ENCODE measurements at regions of chr12 and their contacts with region 1.

Region 1: GRCh38 chr12:47779301-47779942 is 6.4 kb downstream of the SLC48A1 start:
- DNase-seq: peak; percentile 83 to 94 (median 89)
- ATAC-seq: peak; percentile 85
- H3K4me3 ChIP-seq: no peak overlapping the region
- H3K27ac ChIP-seq: no peak overlapping the region
- H3K4me1 ChIP-seq: peaks cover 11 to 52% of the 10 kb centered on the region in 2 donors
- H3K27me3 ChIP-seq: no peaks in the 10 kb centered on the region
- CTCF ChIP-seq: peak; percentile 88 to 93

Region 2: GRCh38 chr12:47630316-47630715 is 149.1 kb before region 1 on chr12:
- intact Hi-C with region 1: no loop called
- DNase-seq: no peak
- ATAC-seq: no peak
- H3K4me3 ChIP-seq: no peak overlapping the region
- H3K27ac ChIP-seq: no peak overlapping the region
- H3K4me1 ChIP-seq: no peaks in the 10 kb centered on the region
- H3K27me3 ChIP-seq: no peaks in the 10 kb centered on the region
- CTCF ChIP-seq: no peak

Region 3: DNA sequence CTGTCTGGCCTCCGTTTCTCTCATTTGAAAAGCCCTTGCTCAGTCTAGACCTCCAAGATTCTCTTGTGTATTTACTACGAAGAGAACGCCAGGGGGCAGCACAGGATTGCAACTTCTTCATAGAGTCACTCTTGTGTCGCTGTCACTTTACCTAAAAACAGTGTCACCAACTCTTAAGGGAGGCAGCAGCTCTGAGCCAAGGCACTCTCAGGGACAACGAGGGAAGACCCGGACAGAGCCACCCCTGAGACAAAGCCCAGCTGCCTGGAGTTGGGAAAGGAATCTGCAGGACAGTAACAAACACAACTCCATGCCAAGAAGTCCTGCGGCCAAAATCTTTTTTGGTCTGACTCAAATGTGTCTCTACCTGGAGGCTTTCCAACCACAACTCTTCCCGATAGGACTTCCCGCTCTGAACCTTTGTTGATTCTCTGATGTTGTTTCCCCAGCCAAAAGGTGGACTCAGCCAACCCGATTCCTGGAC is 64.0 kb before region 1 on chr12:
- intact Hi-C with region 1: loop called in 1 of 2 experiments (anchors 5 kb)
- DNase-seq: peak in 3 of 4 donors; percentile 71 to 83 (median 78)
- ATAC-seq: peak; percentile 75
- H3K4me3 ChIP-seq: no peak overlapping the region
- H3K27ac ChIP-seq: no peak overlapping the region
- H3K4me1 ChIP-seq: peaks cover 19 to 36% of the 10 kb centered on the region in 2 donors
- H3K27me3 ChIP-seq: no peaks in the 10 kb centered on the region
- CTCF ChIP-seq: peak; percentile 76 to 82

Region 4: DNA sequence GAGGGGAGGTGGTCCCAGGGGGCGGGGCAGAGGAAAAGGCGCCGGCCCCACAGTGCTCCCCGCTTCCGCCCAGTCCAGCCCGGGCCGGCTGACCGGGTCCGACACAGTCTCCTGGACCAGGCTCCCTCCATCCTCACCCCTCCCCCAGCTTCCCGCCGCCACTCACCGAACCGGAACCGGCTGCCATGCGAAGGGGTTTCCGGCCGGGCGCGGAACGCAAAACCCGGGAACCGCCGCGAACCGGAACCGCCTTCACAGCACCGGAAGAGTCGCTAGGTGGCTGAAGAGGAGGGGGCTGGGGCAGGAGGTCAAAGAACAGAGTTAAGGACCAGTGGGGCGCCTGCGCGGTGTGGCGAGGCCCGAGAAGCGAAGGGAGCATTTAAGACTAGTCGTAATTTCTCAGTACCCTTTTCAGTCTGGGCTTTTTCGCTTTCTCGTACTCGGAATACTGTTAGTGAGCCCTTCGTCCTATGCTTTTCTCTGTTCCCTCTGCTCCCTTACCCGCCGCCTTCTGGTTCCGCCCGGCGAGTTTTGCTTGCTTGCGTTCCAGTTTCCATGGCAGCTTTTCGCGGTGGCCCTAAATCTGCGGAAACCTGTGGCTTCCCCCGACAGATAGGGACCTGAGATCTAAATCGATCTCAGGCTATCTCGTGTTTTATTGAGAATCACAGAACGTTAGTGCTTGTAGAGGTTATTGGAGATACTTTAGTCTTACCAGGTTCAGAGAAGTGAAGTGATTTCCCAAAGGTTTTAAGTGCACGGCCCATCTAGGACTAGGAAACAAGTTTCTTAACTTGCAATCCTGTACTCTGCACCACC is 326.6 kb after region 1 on chr12 and contains the start of gene SENP1:
- intact Hi-C with region 1: no loop called
- DNase-seq: peak; percentile 88 to 95 (median 90)
- ATAC-seq: peak; percentile 91
- H3K4me3 ChIP-seq: peak within 1 kb of the TSS; percentile 85 to 88
- H3K27ac ChIP-seq: peak within 1 kb of the TSS; percentile 96 to 97
- H3K4me1 ChIP-seq: peaks cover 17 to 37% of the 10 kb centered on the region in 2 donors
- H3K27me3 ChIP-seq: no peaks in the 10 kb centered on the region
- CTCF ChIP-seq: no peak
- polyA plus RNA-seq, gene SENP1: 23.2 to 28.0 (median 25.5) TPM

Measured in left lung (tissue), 14 donors.